ENCODE measurements at regions of chr3 and their contacts with region 1.

Region 1: GRCh38 chr3:15113463-15113862 is 14.5 kb upstream of the RBSN start:
- DNase-seq: no peak
- H3K4me3 ChIP-seq: no peak overlapping the region
- H3K27ac ChIP-seq: no peak overlapping the region
- H3K4me1 ChIP-seq: no peaks in the 10 kb centered on the region
- H3K27me3 ChIP-seq: no peaks in the 10 kb centered on the region
- CTCF ChIP-seq: no peak
- POLR2A ChIP-seq: no peak

Region 2: DNA sequence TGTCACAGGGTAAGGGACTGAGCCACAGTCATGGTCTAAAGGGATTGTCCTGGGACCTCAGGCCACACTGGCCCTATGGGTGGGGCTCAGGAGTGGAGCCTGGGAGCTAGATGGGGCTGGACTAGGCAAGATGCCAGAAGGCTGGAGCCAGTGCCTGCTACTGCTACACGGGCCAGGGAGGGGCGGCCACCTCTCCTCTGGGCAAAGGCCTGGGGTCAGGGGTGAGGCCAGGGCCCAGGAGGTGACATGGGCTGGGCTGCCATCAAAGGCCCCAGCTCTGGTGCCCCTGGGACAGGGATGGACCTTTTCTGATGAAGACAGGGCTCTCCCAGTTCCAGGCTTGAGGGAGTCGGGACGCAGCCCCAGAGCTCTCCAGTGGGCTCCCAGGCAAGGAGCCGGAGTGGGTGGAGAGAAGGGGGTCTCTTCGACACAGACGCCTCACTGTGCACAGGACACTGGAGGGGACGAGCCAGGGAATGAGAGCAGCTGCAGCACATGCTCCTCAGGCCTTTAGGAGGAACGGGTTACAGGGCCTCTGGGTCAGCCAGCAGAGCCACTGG is 1978.1 kb before region 1 on chr3:
- intact Hi-C with region 1: no loop called
- DNase-seq: no peak
- H3K4me3 ChIP-seq: no peak overlapping the region
- H3K27ac ChIP-seq: no peak overlapping the region
- H3K4me1 ChIP-seq: no peaks in the 10 kb centered on the region
- H3K27me3 ChIP-seq: no peaks in the 10 kb centered on the region
- CTCF ChIP-seq: no peak
- POLR2A ChIP-seq: no peak

Region 3: GRCh38 chr3:15409239-15410168 is 296.0 kb after region 1 on chr3:
- intact Hi-C with region 1: loop called (anchors 10 kb)
- DNase-seq: no peak
- H3K4me3 ChIP-seq: no peak overlapping the region
- H3K27ac ChIP-seq: no peak overlapping the region
- H3K4me1 ChIP-seq: no peaks in the 10 kb centered on the region
- H3K27me3 ChIP-seq: no peaks in the 10 kb centered on the region
- CTCF ChIP-seq: no peak
- POLR2A ChIP-seq: no peak